AG04449 (cell line): ENCODE measurements at regions of chr20 and their contacts with region 1.

Region 1: DNA sequence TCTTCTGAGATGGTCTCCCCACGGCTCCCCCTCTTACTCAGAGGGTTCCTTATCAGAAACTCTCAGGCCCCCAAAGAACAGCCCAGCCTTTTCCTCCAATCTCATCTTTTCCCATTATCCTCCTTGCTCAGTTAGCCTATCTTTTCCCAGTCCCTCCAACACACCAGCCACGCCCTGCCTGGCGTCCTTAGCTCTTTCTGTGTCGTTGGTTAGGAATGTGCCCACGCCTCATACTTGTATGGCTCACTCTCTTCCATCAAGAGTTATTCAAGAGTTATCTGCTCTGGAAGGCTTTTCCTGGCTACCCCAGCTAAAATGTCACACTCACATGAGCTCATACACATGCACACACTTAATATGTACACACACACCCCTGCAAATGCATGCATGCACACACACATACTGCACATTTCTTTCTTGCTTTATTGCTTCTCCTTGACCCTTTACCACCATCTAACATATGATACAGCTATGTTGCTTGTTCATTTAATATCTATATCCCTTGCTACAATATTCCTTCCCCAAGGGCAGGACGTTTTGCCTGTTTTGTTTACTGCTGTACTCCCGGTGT is 37.6 kb downstream of the SLC2A10 start:
- DNase-seq: peak; percentile 3
- H3K4me3 ChIP-seq: no peak overlapping the region
- CTCF ChIP-seq: no peak

Region 2: GRCh38 chr20:46757754-46758678 is 11.0 kb after region 1 on chr20:
- CTCF ChIA-PET with region 1: interaction called, 115 read pairs
- POLR2A ChIA-PET with region 1: no interaction called
- DNase-seq: no peak
- H3K4me3 ChIP-seq: no peak overlapping the region
- CTCF ChIP-seq: peak; percentile 93